ENCODE measurements at regions of chr3 and their contacts with region 1.

Region 1: GRCh38 chr3:14402304-14402811 is at the start of gene SLC6A6:
- DNase-seq: peak; percentile 98
- ATAC-seq: peak; percentile 92
- total RNA-seq, gene SLC6A6: 13.5 TPM

Region 2: GRCh38 chr3:14001136-14001535 is 401.2 kb before region 1 on chr3:
- intact Hi-C with region 1: no loop called
- DNase-seq: no peak
- ATAC-seq: no peak

Region 3: DNA sequence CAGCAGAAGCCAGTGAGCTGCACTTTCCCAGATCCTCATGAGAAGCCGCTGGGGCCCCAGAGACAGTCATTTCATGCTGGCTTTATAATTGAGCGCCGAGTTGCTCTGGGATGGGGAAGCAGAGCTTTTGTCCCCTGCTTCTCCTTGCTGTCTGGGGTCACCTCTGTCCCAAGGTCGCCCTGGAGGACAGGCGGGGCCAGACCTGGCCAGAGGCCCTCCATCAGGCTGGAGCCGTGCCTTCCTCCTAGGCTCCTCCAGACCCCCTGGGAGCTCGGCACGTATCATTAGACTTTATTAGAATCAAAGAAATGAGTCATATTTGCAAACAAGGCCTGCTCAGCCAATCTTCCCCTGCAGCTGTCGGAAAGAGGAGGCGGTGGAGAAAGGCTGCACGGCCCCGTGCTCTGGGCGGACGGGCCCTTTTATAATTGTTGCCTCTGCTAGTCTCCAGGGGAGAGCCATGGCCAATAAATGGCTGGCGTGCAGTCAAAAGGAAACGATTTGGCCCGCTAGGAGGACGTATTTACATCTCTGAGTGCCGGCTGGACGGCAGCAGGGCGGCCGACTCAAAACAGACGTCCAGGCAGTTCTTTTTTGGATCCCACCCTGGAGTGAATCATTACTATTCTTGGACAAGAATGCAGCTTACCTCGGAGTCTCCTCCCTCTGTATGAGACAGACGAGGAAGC is 50.5 kb after region 1 on chr3:
- intact Hi-C with region 1: loop called (anchors 10 kb)
- DNase-seq: peak; percentile 92
- ATAC-seq: peak; percentile 93

Measured in Right ventricle myocardium superior (tissue), 1 donor.